ENCODE measurements at regions of chr19 and their contacts with region 1.

Region 1: GRCh38 chr19:16185123-16185767 is at the start of gene FAM32A:
- DNase-seq: peak; percentile 88 to 100 (median 99)
- ATAC-seq: peak; percentile 90 to 91
- H3K4me3 Mint-ChIP-seq: peak within 1 kb of the TSS; percentile 95 to 100 (median 98)
- H3K27ac Mint-ChIP-seq: peak within 1 kb of the TSS; percentile 95 to 99 (median 98)
- H3K4me1 Mint-ChIP-seq: peaks cover 17 to 48% (median 36%) of the 10 kb centered on the region in 4 donors
- H3K27me3 Mint-ChIP-seq: peaks cover 0 to 1% (median 0%) of the 10 kb centered on the region in 5 donors
- polyA plus RNA-seq, gene FAM32A: 150 to 205 (median 183) TPM

Region 2: DNA sequence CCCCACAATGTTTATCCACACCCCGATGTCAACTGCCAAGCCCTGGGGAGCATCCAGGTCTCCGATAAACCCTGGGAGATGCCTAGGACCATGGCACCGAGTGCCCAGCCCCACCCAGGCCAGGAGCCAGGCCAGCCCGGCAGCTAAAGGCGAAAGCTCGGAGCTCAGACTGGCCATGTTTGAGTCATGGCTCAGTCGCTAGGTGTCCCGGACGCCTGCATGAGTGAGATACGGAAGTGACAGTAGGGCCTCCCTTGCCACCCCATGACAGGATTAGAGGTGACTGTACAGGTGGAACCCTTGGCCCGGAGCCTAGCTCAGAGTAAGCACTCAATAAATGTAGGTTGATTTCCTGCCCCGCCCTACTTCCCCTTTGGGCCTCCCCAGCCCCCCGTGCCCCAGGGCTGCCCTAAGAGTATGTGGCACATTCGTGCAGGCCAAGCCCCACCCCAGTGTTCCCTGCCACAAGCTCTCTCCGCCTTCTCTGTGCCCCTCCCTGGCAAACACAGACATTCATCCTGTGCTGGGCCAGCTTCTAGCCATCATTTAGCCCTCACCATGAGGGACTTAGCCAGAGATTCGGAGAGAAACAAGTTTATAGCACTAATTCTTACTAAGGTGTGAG is 114.8 kb before region 1 on chr19:
- POLR2A ChIA-PET with region 1: interaction called, 10 read pairs
- DNase-seq: peak; percentile 67 to 97 (median 86)
- ATAC-seq: peak; percentile 91 to 94
- H3K4me3 Mint-ChIP-seq: peak overlapping the region in 4 of 10 donors; percentile 70 to 79 (median 78)
- H3K27ac Mint-ChIP-seq: no peak overlapping the region
- H3K4me1 Mint-ChIP-seq: peaks cover 25 to 41% (median 33%) of the 10 kb centered on the region in 4 donors
- H3K27me3 Mint-ChIP-seq: no peaks in the 10 kb centered on the region

Region 3: GRCh38 chr19:16280306-16280705 is 95.1 kb after region 1 on chr19:
- POLR2A ChIA-PET with region 1: no interaction called
- DNase-seq: no peak
- ATAC-seq: no peak
- H3K4me3 Mint-ChIP-seq: no peak overlapping the region
- H3K27ac Mint-ChIP-seq: peak overlapping the region in 6 of 10 donors; percentile 34 to 92 (median 57)
- H3K4me1 Mint-ChIP-seq: peaks cover 12 to 40% (median 29%) of the 10 kb centered on the region in 4 donors
- H3K27me3 Mint-ChIP-seq: peaks cover 0 to 2% (median 0%) of the 10 kb centered on the region in 5 donors

Measured in naive thymus-derived CD8-positive, alpha-beta T cell (primary cell).